ENCODE measurements at regions of chr3 and their contacts with region 1.

Region 1: DNA sequence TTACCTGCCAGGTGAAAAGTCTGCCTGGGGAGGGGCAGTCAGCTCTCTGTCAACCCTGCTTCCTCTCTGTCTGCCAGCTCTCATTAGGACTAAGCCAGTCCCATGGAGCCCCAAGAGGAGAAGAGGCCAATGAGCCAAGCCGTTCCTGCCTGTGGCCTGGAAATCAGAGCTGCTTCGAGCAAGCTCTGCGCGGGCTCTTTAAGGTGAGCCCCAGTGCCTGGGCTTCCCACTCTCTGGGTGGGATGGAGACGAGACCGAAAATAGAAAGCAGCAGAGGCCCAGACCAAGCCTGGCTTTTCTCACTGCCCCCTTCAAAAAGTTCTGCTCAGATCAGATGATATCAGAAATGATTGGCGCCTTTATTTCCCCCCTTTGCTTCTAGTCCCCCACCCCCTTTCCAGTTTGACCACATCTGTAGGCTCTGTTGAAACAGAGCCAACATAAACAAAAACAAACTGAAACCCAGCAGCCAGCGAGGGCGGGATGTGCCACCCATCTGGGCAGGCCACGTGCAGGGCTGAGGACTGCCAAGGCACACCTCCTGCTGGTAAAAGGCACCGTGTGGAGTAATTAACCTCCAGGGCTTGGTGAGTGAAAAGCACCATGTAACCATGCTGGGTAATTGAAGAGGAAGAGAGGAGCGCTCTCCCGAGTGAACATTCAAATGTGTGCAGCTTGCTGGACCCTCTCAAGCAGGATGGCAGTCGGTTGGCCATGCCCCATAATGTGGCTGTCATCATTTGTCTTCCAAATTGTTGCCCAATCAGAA is 471.0 kb upstream of the PROK2 start:
- DNase-seq: peak; percentile 41 to 82
- H3K4me3 ChIP-seq: no peak overlapping the region
- H3K27ac ChIP-seq: peak overlapping the region; percentile 46 to 67
- H3K4me1 ChIP-seq: peaks cover 0 to 30% (median 26%) of the 10 kb centered on the region in 4 donors
- H3K27me3 ChIP-seq: no peaks in the 10 kb centered on the region
- CTCF ChIP-seq: peak in 1 of 2 experiments; percentile 13

Region 2: DNA sequence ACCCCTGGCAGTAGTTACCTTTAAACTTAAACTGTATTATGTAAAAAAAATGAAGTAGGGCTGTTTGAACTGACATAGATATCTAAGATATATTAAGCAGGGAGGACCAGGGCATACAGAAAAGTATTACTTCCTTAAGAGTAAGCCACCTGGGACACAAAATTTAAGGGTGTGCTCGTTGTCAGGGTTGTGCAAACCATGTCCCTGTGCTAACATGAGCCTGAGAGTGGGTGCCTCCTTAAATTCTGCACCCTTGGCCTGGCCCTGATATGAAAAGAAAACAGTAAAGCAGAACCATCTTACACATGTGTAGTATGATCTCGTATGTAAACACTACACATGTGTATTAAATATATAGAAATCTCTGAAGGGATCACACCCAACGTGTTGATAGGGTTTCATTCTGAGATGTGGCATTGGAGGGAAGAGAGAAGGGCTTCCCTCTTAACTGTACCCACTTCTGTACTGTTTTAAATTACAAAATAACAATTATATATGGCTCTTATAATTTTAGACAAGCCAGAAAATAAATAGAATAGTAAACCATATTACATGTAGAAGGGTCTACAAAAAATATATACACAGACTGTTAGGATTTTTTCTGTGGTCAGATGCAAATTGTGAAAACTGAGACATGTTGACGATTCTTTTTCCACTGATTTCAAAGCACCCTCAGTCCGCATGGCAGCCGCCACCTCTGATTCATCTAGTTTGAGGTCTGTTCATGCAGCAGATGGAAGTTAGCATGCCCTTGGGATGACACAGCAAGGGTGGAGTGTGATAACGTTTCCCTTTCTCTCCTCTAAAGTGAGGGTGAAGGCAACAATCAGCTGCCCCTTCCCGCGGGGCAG is 70.2 kb before region 1 on chr3:
- intact Hi-C with region 1: loop called (anchors 10 kb)
- DNase-seq: no peak
- H3K4me3 ChIP-seq: no peak overlapping the region
- H3K27ac ChIP-seq: peak overlapping the region in 1 of 2 donors; percentile 15
- H3K4me1 ChIP-seq: peaks cover 0 to 12% (median 7%) of the 10 kb centered on the region in 4 donors
- H3K27me3 ChIP-seq: no peaks in the 10 kb centered on the region
- CTCF ChIP-seq: no peak